ENCODE measurements at regions of chr1 and their contacts with region 1.

Region 1: GRCh38 chr1:246689409-246690008 is 34.7 kb upstream of the SCCPDH start:
- DNase-seq: no peak
- H3K4me3 ChIP-seq: peak overlapping the region; percentile 22 to 28
- H3K27ac ChIP-seq: peak overlapping the region; percentile 13
- H3K4me1 ChIP-seq: peaks cover 14% of the 10 kb centered on the region
- H3K27me3 ChIP-seq: no peaks in the 10 kb centered on the region
- CTCF ChIP-seq: peak; percentile 26 to 75 (median 51)
- POLR2A ChIP-seq: no peak

Region 2: DNA sequence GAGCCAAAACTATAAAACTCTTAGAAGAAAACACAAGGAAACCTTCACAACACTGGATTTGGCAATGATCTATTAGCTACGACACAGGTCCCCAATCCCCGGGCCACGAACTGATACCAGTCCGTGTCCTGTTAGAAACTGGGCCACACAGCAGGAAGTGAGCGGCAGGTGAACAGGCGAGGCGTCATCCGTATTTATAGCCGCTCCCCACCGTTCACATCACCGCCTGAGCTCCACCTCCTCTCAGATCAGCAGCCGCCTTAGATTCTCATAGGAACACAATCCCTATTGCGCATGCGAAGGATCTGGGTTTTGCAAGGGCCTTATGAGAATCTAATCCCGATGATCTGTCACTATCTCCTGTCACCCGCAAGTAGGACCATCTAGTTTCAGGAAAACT is 135.3 kb before region 1 on chr1:
- intact Hi-C with region 1: no loop called
- DNase-seq: no peak
- H3K4me3 ChIP-seq: no peak overlapping the region
- H3K27ac ChIP-seq: no peak overlapping the region
- H3K4me1 ChIP-seq: no peaks in the 10 kb centered on the region
- H3K27me3 ChIP-seq: no peaks in the 10 kb centered on the region
- CTCF ChIP-seq: no peak
- POLR2A ChIP-seq: no peak

Region 3: GRCh38 chr1:246566128-246566812 is 123.2 kb before region 1 on chr1 and contains the starts of genes CNST and TFB2M:
- intact Hi-C with region 1: loop called (anchors 10 kb)
- DNase-seq: peak; percentile 97 to 99
- H3K4me3 ChIP-seq: peak within 1 kb of the TSS; percentile 92 to 96
- H3K27ac ChIP-seq: peak within 1 kb of the TSS; percentile 98
- H3K4me1 ChIP-seq: peaks cover 48% of the 10 kb centered on the region
- H3K27me3 ChIP-seq: no peaks in the 10 kb centered on the region
- CTCF ChIP-seq: peak in 1 of 3 experiments; percentile 32
- POLR2A ChIP-seq: peak in 1 of 2 donors; percentile 85
- total RNA-seq, gene CNST: 20.6 TPM
- total RNA-seq, gene TFB2M: 6.9 TPM

Region 4: GRCh38 chr1:247131236-247131635 is 441.7 kb after region 1 on chr1:
- intact Hi-C with region 1: no loop called
- DNase-seq: no peak
- H3K4me3 ChIP-seq: no peak overlapping the region
- H3K27ac ChIP-seq: no peak overlapping the region
- H3K4me1 ChIP-seq: peaks cover 6% of the 10 kb centered on the region
- H3K27me3 ChIP-seq: no peaks in the 10 kb centered on the region
- CTCF ChIP-seq: no peak
- POLR2A ChIP-seq: no peak

Measured in vagina (tissue), 2 donors.